ENCODE measurements at regions of chr2 and their contacts with region 1.

Region 1: DNA sequence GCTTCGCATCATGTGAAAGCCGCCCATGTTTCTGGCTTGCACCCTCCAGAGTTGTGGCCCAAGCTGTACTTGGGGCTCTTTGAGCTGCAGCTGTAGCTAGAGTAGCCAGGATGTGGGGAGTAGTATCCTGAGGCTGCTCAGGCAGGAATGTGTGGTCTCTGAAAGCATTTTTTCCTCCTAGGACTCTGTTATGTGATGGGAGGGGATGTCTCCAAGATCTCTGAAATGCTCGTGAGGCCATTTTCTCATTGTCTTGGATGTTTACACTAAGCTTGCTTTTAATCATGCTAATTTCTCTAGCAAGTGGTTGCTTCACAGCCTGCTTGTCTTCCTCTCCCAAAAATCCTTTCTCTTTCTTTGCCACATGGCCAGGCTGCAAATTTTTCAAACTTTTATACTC is 687.6 kb downstream of the DCDC2C start:
- DNase-seq: no peak
- H3K4me3 Mint-ChIP-seq: no peak overlapping the region
- H3K27ac Mint-ChIP-seq: no peak overlapping the region
- H3K4me1 Mint-ChIP-seq: no peaks in the 10 kb centered on the region
- H3K27me3 Mint-ChIP-seq: no peaks in the 10 kb centered on the region

Region 2: GRCh38 chr2:3257166-3257565 is 1133.8 kb before region 1 on chr2:
- CTCF ChIA-PET with region 1: no interaction called
- intact Hi-C with region 1: no loop called
- DNase-seq: no peak
- H3K4me3 Mint-ChIP-seq: no peak overlapping the region
- H3K27ac Mint-ChIP-seq: no peak overlapping the region
- H3K4me1 Mint-ChIP-seq: peaks cover 16% of the 10 kb centered on the region
- H3K27me3 Mint-ChIP-seq: no peaks in the 10 kb centered on the region

Region 3: GRCh38 chr2:4408321-4408720 is 17.3 kb after region 1 on chr2:
- CTCF ChIA-PET with region 1: no interaction called
- intact Hi-C with region 1: loop called (anchors 2 kb)
- DNase-seq: no peak
- H3K4me3 Mint-ChIP-seq: no peak overlapping the region
- H3K27ac Mint-ChIP-seq: no peak overlapping the region
- H3K4me1 Mint-ChIP-seq: no peaks in the 10 kb centered on the region
- H3K27me3 Mint-ChIP-seq: peaks cover 3% of the 10 kb centered on the region

Region 4: DNA sequence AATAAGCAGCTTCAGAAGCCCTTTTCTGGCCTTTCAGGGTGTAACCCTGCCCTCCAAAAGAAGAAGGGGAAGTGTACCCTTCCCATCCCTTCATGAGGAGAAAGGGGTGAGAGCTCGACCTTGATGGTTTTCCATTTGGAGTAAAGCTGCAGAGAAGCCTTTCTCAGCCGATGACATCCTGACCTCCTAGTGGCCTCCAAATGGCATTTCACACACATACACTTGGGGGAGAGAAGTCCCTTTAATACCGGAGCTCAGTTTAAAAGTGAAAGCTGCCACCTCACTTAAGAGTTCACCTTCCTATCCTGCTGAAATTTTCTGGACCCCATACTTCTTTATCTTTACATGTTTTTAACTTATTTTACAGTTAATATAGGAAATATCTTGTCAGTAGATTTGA is 29.0 kb after region 1 on chr2:
- CTCF ChIA-PET with region 1: no interaction called
- intact Hi-C with region 1: no loop called
- DNase-seq: no peak
- H3K4me3 Mint-ChIP-seq: no peak overlapping the region
- H3K27ac Mint-ChIP-seq: no peak overlapping the region
- H3K4me1 Mint-ChIP-seq: no peaks in the 10 kb centered on the region
- H3K27me3 Mint-ChIP-seq: no peaks in the 10 kb centered on the region

Measured in activated naive CD4-positive, alpha-beta T cell treated with anti-CD3 and anti-CD28 coated beads for 36 hours (primary cell).